Naive thymus-derived CD8-positive, alpha-beta T cell (primary cell): ENCODE measurements at regions of chr11 and their contacts with region 1.

Region 1: GRCh38 chr11:57741132-57742086 is at the start of gene SELENOH:
- DNase-seq: peak; percentile 74 to 94 (median 90)
- ATAC-seq: peak; percentile 83
- H3K4me3 Mint-ChIP-seq: peak within 1 kb of the TSS; percentile 92 to 100 (median 99)
- H3K27ac Mint-ChIP-seq: peak within 1 kb of the TSS; percentile 95 to 99 (median 98)
- H3K4me1 Mint-ChIP-seq: peaks cover 16 to 49% (median 45%) of the 10 kb centered on the region in 4 donors
- H3K27me3 Mint-ChIP-seq: no peaks in the 10 kb centered on the region
- polyA plus RNA-seq, gene SELENOH: 294 to 419 (median 342) TPM

Region 2: GRCh38 chr11:57657194-57658022 is 84.0 kb before region 1 on chr11 and contains the start of gene CLP1:
- POLR2A ChIA-PET with region 1: interaction called, 12 read pairs
- DNase-seq: peak; percentile 94 to 99 (median 98)
- ATAC-seq: peak; percentile 95
- H3K4me3 Mint-ChIP-seq: peak within 1 kb of the TSS; percentile 90 to 100 (median 98)
- H3K27ac Mint-ChIP-seq: peak within 1 kb of the TSS; percentile 94 to 99 (median 96)
- H3K4me1 Mint-ChIP-seq: peaks cover 17 to 49% (median 37%) of the 10 kb centered on the region in 4 donors
- H3K27me3 Mint-ChIP-seq: no peaks in the 10 kb centered on the region
- polyA plus RNA-seq, gene CLP1: 7.9 to 13.4 (median 9.4) TPM

Region 3: DNA sequence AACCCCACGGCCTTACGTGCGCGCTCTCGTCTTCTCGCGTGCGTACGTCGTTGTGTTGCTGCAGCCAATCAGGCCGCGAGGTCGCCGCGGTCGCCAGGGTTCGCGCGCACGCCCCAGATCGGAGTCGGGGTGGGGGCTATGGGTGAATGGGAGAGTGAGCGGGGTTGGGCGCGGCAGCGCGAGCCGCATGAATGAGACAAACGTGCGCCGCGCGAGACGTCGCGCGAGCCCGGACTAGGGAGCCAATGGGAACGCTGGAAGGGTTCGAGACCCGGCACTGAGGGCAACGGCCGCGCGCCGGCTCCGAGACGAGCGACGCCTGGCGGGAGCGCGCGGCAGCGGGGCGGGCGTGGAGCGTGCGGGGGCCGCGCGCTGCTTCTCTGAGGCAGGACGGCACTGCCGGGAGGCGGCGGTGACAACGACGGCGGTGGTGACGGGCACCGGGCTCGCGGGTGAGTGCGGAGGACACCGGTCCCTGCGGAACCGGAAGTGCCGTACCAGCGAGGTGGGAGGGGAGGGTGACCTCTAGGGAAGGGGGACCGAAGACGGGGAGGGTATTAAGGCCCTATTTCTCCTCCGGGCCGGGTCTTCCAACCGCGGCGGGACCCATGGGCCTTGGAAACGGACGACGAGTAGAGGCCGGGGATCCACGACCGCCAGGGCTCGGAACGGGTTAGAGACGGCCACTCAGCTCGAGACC is 73.5 kb before region 1 on chr11 and contains the start of gene ZDHHC5:
- POLR2A ChIA-PET with region 1: interaction called, 26 read pairs
- DNase-seq: peak in 9 of 10 donors; percentile 98 to 100 (median 100)
- ATAC-seq: peak; percentile 85 to 88
- H3K4me3 Mint-ChIP-seq: peak within 1 kb of the TSS; percentile 88 to 97 (median 92)
- H3K27ac Mint-ChIP-seq: peak within 1 kb of the TSS; percentile 98 to 100 (median 99)
- H3K4me1 Mint-ChIP-seq: peaks cover 33 to 54% (median 52%) of the 10 kb centered on the region in 4 donors
- H3K27me3 Mint-ChIP-seq: no peaks in the 10 kb centered on the region
- polyA plus RNA-seq, gene ZDHHC5: 25.0 to 43.4 (median 26.4) TPM

Region 4: DNA sequence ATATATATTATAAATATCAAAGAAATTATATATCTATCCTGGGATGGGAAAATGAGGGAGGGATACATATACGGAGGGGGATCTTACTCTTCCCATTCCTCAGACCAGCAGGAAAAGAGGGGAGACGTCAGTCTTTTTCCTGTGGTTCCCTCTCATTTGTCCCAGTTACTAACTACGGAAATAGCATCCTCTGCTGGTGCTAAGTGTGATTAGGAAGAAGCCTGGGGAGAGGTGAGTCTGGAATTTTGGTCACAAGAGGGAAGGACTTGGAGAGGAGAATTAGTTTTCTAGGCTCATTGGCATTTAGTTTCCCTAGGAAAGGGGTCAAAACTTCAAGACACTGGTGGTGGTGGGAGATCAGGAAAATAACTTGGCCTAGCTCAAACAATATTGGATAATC is 41.0 kb before region 1 on chr11:
- POLR2A ChIA-PET with region 1: no interaction called
- DNase-seq: no peak
- ATAC-seq: no peak
- H3K4me3 Mint-ChIP-seq: no peak overlapping the region
- H3K27ac Mint-ChIP-seq: peak overlapping the region in 3 of 10 donors; percentile 7 to 50 (median 14)
- H3K4me1 Mint-ChIP-seq: peaks cover 0 to 3% (median 0%) of the 10 kb centered on the region in 4 donors
- H3K27me3 Mint-ChIP-seq: no peaks in the 10 kb centered on the region

Region 5: DNA sequence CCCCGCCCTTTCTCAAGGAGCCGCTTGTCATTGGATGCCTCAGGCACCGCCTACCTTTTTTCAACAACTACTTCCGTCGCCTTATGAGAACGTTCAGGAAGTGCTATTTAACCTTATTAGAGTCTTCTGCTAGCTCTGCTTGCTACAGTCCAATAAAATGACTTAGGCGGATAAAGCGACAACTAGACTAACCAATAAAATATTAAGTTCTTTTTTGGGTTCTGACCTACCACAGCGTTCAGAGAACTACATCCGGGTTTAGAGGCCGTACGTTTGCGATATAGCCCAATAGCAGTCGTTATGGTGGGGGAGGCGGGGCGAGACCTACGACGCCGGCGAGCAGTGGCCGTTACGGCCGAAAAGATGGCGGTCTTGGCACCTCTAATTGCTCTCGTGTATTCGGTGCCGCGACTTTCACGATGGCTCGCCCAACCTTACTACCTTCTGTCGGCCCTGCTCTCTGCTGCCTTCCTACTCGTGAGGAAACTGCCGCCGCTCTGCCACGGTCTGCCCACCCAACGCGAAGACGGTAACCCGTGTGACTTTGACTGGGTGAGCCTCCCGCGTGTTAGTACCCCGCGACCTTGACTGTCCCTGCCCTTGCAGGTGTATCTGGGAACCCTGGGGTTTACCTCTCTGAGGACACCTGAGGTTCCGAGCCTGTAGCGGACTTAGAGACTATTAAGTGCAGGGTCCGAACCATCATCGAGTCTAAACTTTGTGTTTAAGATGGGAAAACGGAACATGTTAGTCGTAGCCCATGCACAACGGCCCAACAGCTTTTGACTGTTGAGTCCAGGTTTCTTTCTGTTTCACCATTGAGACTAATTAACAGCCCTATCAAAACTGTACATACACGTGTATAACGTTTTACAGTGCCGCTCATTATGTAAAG is 28.9 kb before region 1 on chr11 and contains the start of gene TMX2:
- POLR2A ChIA-PET with region 1: interaction called, 41 read pairs
- DNase-seq: peak; percentile 79 to 95 (median 88)
- ATAC-seq: peak; percentile 93
- H3K4me3 Mint-ChIP-seq: peak within 1 kb of the TSS; percentile 87 to 99 (median 96)
- H3K27ac Mint-ChIP-seq: peak within 1 kb of the TSS; percentile 92 to 99 (median 97)
- H3K4me1 Mint-ChIP-seq: peaks cover 24 to 54% (median 49%) of the 10 kb centered on the region in 4 donors
- H3K27me3 Mint-ChIP-seq: no peaks in the 10 kb centered on the region
- polyA plus RNA-seq, gene TMX2: 69.9 to 85.8 (median 82.7) TPM

Region 6: DNA sequence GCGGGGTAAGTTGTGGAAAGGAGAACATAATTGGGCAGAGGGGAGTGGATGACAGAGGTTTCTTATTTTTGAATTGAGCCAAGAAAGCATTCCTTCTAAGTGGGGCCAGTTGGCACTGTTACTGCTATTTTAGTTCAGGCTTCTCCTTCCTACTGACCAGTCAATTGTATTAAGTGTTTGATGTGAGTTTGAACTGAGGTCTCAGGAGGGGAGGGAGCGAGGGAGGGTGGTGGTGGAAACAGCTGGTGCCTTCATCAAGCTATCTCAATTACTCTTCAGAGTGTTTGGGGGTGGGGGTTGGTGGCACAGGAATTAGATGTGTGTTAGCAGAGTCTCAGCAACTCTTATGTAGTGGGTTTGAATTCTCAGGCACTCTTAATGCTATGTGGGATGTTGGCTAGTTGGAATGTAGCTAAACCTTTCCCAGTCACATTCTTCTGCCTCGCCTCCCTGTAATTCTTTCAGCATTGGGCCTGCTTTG is 34.7 kb after region 1 on chr11:
- POLR2A ChIA-PET with region 1: no interaction called
- DNase-seq: no peak
- ATAC-seq: no peak
- H3K4me3 Mint-ChIP-seq: no peak overlapping the region
- H3K27ac Mint-ChIP-seq: peak overlapping the region in 1 of 10 donors; percentile 53
- H3K4me1 Mint-ChIP-seq: peaks cover 14 to 48% (median 30%) of the 10 kb centered on the region in 4 donors
- H3K27me3 Mint-ChIP-seq: no peaks in the 10 kb centered on the region

Region 7: GRCh38 chr11:57792060-57792541 is 50.7 kb after region 1 on chr11:
- POLR2A ChIA-PET with region 1: interaction called, 17 read pairs
- DNase-seq: peak; percentile 72 to 94 (median 82)
- ATAC-seq: peak; percentile 93 to 96
- H3K4me3 Mint-ChIP-seq: peak overlapping the region; percentile 55 to 88 (median 82)
- H3K27ac Mint-ChIP-seq: peak overlapping the region; percentile 94 to 98 (median 97)
- H3K4me1 Mint-ChIP-seq: peaks cover 20 to 58% (median 39%) of the 10 kb centered on the region in 4 donors
- H3K27me3 Mint-ChIP-seq: peaks cover 0 to 2% (median 0%) of the 10 kb centered on the region in 5 donors

Region 8: DNA sequence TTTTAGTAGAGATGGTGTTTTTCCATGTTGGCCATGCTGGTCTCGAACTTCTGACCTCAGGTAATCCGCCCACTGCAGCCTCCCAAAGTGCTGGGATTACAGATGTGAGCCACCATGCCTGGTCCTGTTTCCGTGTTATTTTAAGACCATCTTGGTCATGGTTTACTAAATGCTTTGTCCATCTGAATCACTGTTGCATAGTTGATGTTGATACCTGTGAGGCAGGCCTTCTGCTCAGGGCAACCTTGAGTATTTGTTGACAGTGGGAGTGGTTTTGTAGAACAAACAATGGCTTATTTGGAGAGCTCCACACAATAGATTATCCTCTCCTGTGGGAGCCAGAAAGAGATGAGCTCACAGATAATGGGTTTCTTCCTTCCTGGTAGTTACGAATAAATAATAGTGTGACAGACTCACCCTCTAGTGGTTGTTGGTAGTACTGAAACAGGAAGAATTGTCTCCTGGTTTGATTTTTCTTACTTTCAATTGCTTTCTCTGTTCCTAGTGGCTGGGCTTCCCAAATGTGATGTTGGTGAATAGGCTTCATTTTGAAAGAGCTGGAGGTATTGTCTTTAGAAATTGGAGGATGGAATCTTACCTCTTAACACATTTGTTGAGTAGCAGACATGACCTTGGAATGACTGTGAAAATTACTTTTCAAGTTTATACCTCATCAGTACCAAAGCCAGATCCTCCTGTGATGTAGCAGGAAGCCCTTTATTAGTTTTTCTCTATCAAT is 59.2 kb after region 1 on chr11:
- POLR2A ChIA-PET with region 1: interaction called, 28 read pairs
- DNase-seq: peak in 5 of 10 donors; percentile 16 to 72 (median 67)
- ATAC-seq: peak; percentile 84 to 92
- H3K4me3 Mint-ChIP-seq: peak overlapping the region in 8 of 10 donors; percentile 0 to 56 (median 24)
- H3K27ac Mint-ChIP-seq: peak overlapping the region; percentile 64 to 93 (median 80)
- H3K4me1 Mint-ChIP-seq: peaks cover 8 to 32% (median 29%) of the 10 kb centered on the region in 4 donors
- H3K27me3 Mint-ChIP-seq: no peaks in the 10 kb centered on the region